ENCODE measurements at regions of chr17 and their contacts with region 1.

Region 1: DNA sequence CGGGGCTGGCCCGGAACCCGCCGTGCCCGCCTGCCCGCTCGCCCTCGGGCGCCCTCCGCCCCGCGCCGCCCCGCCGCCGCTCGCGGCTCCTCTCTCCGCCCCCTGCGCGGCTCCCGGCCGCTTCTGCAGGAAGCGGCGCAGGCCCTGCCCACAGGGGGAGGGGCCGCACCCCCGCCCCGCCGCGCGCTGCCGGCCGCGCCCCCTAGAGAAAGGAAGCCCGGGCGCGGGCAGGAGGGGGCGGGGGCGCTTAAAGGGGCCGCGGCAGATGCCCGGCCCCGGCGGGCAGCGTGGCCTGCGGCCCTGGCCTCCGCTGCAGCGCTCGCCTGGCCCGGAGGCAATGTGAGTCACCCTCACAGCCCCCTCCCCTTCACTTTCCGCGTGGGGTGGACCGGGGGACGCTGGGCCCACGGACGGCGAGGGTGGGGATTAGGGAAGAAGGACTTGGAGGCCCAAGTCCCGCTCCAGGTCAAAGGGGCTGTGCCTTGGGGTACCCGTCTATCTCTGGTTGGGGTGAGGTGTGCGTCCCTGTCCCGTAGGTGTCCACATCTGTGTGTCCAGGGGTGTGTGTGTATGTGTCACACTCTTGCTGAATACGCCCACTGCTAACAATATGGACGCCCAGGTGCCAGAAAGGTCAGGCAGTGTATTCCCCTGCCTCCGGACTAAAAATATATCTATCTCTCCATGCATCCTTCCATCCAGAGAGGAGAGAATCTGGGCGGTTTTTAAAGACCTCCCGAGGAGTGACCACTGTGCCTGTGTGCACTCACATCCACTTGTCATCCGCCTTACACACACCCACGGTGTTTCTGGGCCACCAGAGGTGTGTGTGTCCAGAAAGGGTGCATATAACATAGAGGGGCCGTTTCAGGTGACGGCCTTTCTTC is at the start of gene GIT1:
- DNase-seq: peak; percentile 81 to 86 (median 85)
- H3K4me3 ChIP-seq: peak within 1 kb of the TSS; percentile 61 to 82
- H3K4me3 Mint-ChIP-seq: peak within 1 kb of the TSS; percentile 93 to 97 (median 95)
- H3K27ac ChIP-seq: peak within 1 kb of the TSS; percentile 70
- H3K27ac Mint-ChIP-seq: peak within 1 kb of the TSS; percentile 86 to 97 (median 92)
- H3K4me1 ChIP-seq: peaks cover 82% of the 10 kb centered on the region
- H3K4me1 Mint-ChIP-seq: peaks cover 30 to 71% (median 53%) of the 10 kb centered on the region in 4 donors
- H3K27me3 ChIP-seq: no peaks in the 10 kb centered on the region
- H3K27me3 Mint-ChIP-seq: no peaks in the 10 kb centered on the region
- total RNA-seq, gene GIT1: 78.9 to 82.8 TPM

Region 2: GRCh38 chr17:29608891-29609361 is 19.2 kb after region 1 on chr17:
- CTCF ChIA-PET with region 1: interaction called, 523 read pairs
- POLR2A ChIA-PET with region 1: interaction called, 127 read pairs
- intact Hi-C with region 1: no loop called
- DNase-seq: no peak
- H3K4me3 ChIP-seq: no peak overlapping the region
- H3K4me3 Mint-ChIP-seq: no peak overlapping the region
- H3K27ac ChIP-seq: no peak overlapping the region
- H3K27ac Mint-ChIP-seq: no peak overlapping the region
- H3K4me1 ChIP-seq: peaks cover 10% of the 10 kb centered on the region
- H3K4me1 Mint-ChIP-seq: peaks cover 3 to 4% (median 4%) of the 10 kb centered on the region in 4 donors
- H3K27me3 ChIP-seq: no peaks in the 10 kb centered on the region
- H3K27me3 Mint-ChIP-seq: no peaks in the 10 kb centered on the region

Region 3: DNA sequence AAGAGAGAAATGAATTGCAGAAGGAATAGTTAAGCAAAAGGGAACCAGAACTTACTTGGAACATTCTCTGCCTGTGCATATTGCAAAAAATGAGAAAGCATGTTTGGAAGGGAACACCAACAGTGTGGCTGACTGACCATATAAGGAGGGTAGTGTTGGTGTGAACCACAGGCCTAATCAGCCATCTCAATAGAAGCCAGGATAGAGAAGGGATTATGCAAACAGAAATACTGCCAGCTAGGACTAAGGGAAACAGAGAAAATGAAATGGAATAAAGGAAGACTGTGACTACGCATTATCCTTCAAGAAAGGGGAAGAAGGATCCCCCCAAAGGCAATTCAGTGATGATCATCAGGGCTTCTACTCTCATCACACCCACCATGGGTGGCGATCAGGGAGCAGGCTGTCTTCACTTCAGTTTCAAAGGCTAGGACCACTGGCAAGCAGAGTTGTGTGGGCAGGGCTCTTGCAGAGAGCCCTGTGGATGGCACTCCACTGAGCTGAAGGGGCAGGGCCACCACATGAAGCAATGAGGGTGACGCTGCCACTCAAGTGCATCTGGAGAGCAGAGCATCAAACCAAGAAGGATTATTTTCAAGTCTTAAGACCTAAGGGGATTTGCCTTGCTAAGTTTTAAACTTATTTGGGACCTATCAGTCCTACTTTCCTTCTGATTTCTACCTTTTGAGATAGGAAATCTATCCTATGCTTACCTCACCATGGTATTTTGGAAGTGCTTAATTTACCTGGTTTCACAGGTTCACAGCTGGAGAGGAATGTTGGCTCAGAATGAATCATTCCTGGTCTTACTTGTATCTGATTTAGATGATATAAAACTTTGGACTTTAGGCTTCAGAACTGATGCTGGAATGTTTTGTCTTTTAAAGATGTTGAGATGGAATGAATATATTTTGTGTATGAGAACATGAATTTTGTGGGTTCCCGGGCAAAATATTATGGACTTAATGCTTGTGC is 199.7 kb after region 1 on chr17:
- CTCF ChIA-PET with region 1: no interaction called
- POLR2A ChIA-PET with region 1: no interaction called
- intact Hi-C with region 1: no loop called
- DNase-seq: no peak
- H3K4me3 ChIP-seq: no peak overlapping the region
- H3K4me3 Mint-ChIP-seq: no peak overlapping the region
- H3K27ac ChIP-seq: no peak overlapping the region
- H3K27ac Mint-ChIP-seq: peak overlapping the region in 3 of 7 donors; percentile 44 to 87 (median 76)
- H3K4me1 ChIP-seq: no peaks in the 10 kb centered on the region
- H3K4me1 Mint-ChIP-seq: no peaks in the 10 kb centered on the region
- H3K27me3 ChIP-seq: no peaks in the 10 kb centered on the region
- H3K27me3 Mint-ChIP-seq: no peaks in the 10 kb centered on the region

Region 4: GRCh38 chr17:30230591-30231125 is 640.9 kb after region 1 on chr17:
- CTCF ChIA-PET with region 1: no interaction called
- POLR2A ChIA-PET with region 1: no interaction called
- intact Hi-C with region 1: no loop called
- DNase-seq: no peak
- H3K4me3 ChIP-seq: no peak overlapping the region
- H3K4me3 Mint-ChIP-seq: no peak overlapping the region
- H3K27ac ChIP-seq: no peak overlapping the region
- H3K27ac Mint-ChIP-seq: peak overlapping the region in 1 of 7 donors; percentile 5
- H3K4me1 ChIP-seq: peaks cover 9% of the 10 kb centered on the region
- H3K4me1 Mint-ChIP-seq: peaks cover 6 to 10% (median 8%) of the 10 kb centered on the region in 4 donors
- H3K27me3 ChIP-seq: peaks cover 7% of the 10 kb centered on the region
- H3K27me3 Mint-ChIP-seq: peaks cover 29 to 41% of the 10 kb centered on the region in 2 donors

Measured in CD4-positive, alpha-beta memory T cell (primary cell).